ENCODE measurements at regions of chr5 and their contacts with region 1.

Region 1: DNA sequence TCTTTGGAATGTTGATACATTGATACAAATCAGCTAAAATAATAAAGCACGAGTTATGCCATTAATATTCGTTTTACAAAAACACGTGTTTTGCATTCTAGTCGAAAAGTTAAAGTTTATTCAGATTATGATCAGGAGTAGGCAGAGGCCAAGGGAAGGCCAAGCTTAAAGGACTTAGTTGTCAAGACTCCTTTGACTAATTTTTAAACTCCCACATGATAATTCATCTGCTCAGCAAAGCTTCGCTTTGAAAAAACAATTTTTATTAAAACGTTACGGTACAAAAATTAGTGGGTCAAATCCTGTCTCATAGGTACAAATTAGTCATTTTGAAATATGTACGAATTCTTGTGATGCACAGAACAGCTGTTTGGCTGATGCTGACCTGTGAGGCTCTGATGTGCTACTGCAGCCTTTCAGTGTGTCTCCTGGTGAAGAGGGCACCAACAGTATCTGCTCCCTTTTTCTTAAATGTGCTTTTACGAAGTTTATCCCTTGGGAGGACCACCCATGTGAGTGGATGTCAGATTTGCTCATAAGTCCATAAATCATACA is 23.0 kb upstream of the NR3C1 start:
- DNase-seq: no peak
- ATAC-seq: no peak
- H3K4me3 ChIP-seq: no peak overlapping the region
- H3K27ac ChIP-seq: no peak overlapping the region
- H3K4me1 ChIP-seq: no peaks in the 10 kb centered on the region
- H3K27me3 ChIP-seq: no peaks in the 10 kb centered on the region
- CTCF ChIP-seq: no peak
- EP300 ChIP-seq: no peak
- POLR2A ChIP-seq: no peak
- RAD21 ChIP-seq: no peak

Region 2: GRCh38 chr5:142492781-142493281 is 933.7 kb before region 1 on chr5:
- CTCF ChIA-PET with region 1: no interaction called
- POLR2A ChIA-PET with region 1: no interaction called
- in situ Hi-C with region 1: no loop called
- intact Hi-C with region 1: loop called (anchors 10 kb)
- DNase-seq: no peak
- ATAC-seq: no peak
- H3K4me3 ChIP-seq: no peak overlapping the region
- H3K27ac ChIP-seq: no peak overlapping the region
- H3K4me1 ChIP-seq: peaks cover 31% of the 10 kb centered on the region
- H3K27me3 ChIP-seq: no peaks in the 10 kb centered on the region
- CTCF ChIP-seq: no peak
- EP300 ChIP-seq: no peak
- POLR2A ChIP-seq: no peak
- RAD21 ChIP-seq: no peak

Measured in HepG2 (cell line).